A673 (cell line): ENCODE measurements at regions of chr11 and their contacts with region 1.

Region 1: DNA sequence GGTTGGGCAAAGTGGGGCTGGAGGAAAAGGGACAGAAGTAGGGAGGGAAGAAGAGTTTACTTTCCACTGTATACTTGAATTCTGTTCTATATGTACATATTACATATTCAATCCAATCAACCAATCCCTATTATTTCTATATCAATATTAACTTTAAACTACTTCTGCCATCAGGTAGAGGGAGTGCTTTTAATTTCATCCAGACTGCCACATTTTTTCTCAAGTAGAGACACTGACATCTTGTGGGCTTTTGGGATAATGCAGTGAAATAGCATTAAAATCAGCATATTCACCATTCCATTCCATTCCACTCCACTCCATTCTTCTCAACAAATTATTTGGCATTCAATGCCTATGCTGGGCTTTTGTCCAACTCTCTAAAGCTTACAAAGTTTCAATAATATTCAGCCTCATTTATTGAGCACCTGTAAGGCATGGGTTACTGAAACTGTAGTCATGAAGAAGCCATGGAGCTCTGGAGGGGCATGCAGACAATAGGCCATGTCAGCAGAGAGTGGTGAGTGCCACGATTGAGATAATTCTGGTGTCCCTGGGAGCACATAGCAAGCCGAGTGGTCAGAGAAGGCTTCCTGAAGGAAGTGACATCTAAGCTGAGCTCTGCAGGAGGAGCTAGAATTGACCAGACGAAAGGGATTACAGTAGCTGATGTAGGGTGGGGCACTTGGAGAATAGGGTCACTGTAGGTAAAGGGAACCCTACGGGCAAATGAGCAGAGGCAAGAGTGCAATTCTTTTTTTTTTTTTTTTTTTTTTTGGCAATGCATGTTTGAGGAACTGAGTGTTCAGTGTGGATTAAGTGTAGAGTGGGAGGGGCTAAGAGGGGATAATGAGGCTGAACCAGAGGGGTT is 12.8 kb upstream of the CLPB start:
- DNase-seq: peak; percentile 82
- H3K4me3 ChIP-seq: no peak overlapping the region
- H3K27ac ChIP-seq: no peak overlapping the region
- H3K4me1 ChIP-seq: no peaks in the 10 kb centered on the region
- H3K27me3 ChIP-seq: no peaks in the 10 kb centered on the region
- CTCF ChIP-seq: peak; percentile 90

Region 2: DNA sequence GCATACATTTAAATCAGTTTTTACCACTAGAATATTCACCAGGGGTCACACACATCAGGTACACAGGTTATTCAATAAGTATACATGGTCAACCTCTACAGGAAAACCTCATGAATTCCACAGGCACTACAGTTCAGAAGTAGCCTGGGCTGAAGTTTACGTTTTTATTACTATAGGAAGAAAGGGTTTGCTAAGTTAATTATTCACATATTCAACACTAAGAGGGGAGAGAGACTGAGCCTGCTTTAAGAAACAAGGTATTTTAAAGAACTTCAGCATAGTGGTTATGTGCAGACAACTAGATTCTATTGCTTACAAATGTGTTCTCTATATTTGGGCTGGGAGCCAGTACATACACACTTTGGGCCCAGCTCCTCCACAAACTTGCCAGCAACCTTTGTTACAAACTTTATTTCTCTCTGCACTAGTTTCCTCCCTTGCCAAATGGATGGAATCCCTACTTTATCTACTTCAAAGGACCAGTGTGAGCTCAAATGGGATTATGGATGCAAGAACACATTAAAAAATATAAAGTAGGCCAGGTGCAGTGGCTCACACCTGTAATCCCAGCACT is 416.6 kb before region 1 on chr11:
- CTCF ChIA-PET with region 1: interaction called, 11 read pairs
- POLR2A ChIA-PET with region 1: no interaction called
- intact Hi-C with region 1: loop called (anchors 5 kb)
- DNase-seq: no peak
- H3K4me3 ChIP-seq: no peak overlapping the region
- H3K27ac ChIP-seq: no peak overlapping the region
- H3K4me1 ChIP-seq: peaks cover 15% of the 10 kb centered on the region
- H3K27me3 ChIP-seq: no peaks in the 10 kb centered on the region
- CTCF ChIP-seq: no peak